GM10248 (cell line): ENCODE measurements at regions of chr7 and their contacts with region 1.

Region 1: GRCh38 chr7:117323851-117324701 is 1.2 kb upstream of the WNT2 start:
- DNase-seq: peak; percentile 23
- CTCF ChIP-seq: no peak

Region 2: GRCh38 chr7:117312598-117313580 is 11.2 kb before region 1 on chr7:
- CTCF ChIA-PET with region 1: interaction called, 20 read pairs
- POLR2A ChIA-PET with region 1: no interaction called
- DNase-seq: no peak
- CTCF ChIP-seq: no peak

Region 3: DNA sequence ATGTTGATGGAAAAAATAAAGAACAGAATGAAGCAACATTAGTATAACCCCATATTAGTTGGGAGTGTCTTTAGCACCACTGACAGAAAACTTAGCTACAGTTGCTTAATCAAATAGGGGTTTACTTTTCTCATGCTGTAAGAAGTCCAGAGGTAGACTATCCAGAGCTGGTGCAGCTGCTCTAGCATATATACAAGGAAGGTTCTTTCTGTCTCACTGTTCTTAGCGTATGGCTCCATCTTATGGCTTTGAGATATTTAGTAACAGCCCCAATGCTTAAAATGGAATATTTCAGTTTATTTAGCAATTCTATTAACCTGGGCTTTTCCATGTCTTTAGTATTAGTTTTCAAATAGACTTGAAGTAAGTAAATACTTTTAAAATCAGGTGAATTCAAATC is 13.9 kb after region 1 on chr7:
- CTCF ChIA-PET with region 1: interaction called, 12 read pairs
- POLR2A ChIA-PET with region 1: no interaction called
- DNase-seq: no peak
- CTCF ChIP-seq: no peak

Region 4: GRCh38 chr7:117623606-117624005 is 299.5 kb after region 1 on chr7:
- CTCF ChIA-PET with region 1: no interaction called
- POLR2A ChIA-PET with region 1: no interaction called
- DNase-seq: no peak
- CTCF ChIP-seq: no peak